ENCODE measurements at regions of chr18 and their contacts with region 1.

Region 1: GRCh38 chr18:48445540-48445939 is 36.4 kb upstream of the ZBTB7C start:
- DNase-seq: peak; percentile 60 to 82
- ATAC-seq: peak; percentile 89

Region 2: GRCh38 chr18:48030616-48031480 is 414.7 kb before region 1 on chr18:
- intact Hi-C with region 1: loop called in 1 of 2 experiments (anchors 5 kb)
- DNase-seq: peak; percentile 48 to 64
- ATAC-seq: peak; percentile 89

Region 3: GRCh38 chr18:48252525-48252924 is 193.0 kb before region 1 on chr18:
- intact Hi-C with region 1: no loop called
- DNase-seq: no peak
- ATAC-seq: no peak